ENCODE measurements at regions of chr19 and their contacts with region 1.

Region 1: GRCh38 chr19:6654347-6655310 is 15.3 kb downstream of the TNFSF14 start:
- DNase-seq: peak; percentile 76
- H3K4me3 Mint-ChIP-seq: peak overlapping the region; percentile 75
- H3K27ac Mint-ChIP-seq: peak overlapping the region; percentile 98
- H3K4me1 Mint-ChIP-seq: peaks cover 59% of the 10 kb centered on the region
- H3K27me3 Mint-ChIP-seq: no peaks in the 10 kb centered on the region

Region 2: DNA sequence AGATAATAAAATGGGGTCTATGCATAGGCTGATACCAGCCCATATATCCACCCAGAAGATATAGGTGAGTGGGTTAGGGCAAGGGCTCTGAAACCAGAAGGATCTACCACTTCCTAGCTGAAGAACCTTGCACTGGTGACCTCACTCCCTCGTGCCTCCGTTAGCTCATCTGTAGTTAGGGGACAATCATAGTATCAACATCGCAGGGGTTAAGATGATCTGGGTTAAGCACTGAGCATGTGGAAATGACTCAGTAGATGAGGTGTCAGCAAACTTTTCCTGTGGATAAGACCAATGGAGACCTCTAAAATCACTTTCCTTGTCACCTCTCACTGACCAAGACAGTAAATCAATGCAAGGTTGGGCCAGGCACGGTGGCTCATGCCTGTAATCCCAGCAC is 15.2 kb before region 1 on chr19:
- CTCF ChIA-PET with region 1: interaction called, 7 read pairs
- POLR2A ChIA-PET with region 1: interaction called, 63 read pairs
- DNase-seq: peak; percentile 68
- H3K4me3 Mint-ChIP-seq: no peak overlapping the region
- H3K27ac Mint-ChIP-seq: peak overlapping the region; percentile 47
- H3K4me1 Mint-ChIP-seq: peaks cover 46% of the 10 kb centered on the region
- H3K27me3 Mint-ChIP-seq: peaks cover 1% of the 10 kb centered on the region

Region 3: DNA sequence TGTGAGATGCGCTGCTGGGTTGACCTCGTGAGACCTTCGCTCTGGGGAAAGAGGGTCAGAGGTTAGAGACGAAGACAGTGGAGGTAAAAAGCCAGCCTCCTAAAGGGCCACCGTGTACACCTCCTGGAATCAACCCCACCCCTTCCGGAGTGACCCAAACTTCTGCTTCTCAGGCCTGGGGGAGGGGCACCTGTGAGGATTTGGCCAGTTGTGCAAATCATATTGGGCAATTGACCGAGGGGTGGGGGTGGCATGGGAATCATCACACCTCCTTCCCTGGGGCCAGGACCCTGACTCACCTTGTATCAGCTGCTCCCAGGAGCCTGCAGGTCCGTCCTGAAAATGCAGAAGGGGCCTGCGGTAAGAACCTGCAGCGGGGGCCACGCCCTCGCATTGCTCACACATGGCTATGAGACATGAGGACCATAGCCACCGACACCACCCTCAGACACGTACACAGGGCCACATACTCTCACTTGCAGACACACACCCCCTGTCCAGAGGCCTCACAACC is 12.5 kb after region 1 on chr19:
- CTCF ChIA-PET with region 1: interaction called, 6 read pairs
- POLR2A ChIA-PET with region 1: interaction called, 66 read pairs
- DNase-seq: peak; percentile 45
- H3K4me3 Mint-ChIP-seq: peak overlapping the region; percentile 56
- H3K27ac Mint-ChIP-seq: peak overlapping the region; percentile 48
- H3K4me1 Mint-ChIP-seq: peaks cover 46% of the 10 kb centered on the region
- H3K27me3 Mint-ChIP-seq: peaks cover 5% of the 10 kb centered on the region

Region 4: DNA sequence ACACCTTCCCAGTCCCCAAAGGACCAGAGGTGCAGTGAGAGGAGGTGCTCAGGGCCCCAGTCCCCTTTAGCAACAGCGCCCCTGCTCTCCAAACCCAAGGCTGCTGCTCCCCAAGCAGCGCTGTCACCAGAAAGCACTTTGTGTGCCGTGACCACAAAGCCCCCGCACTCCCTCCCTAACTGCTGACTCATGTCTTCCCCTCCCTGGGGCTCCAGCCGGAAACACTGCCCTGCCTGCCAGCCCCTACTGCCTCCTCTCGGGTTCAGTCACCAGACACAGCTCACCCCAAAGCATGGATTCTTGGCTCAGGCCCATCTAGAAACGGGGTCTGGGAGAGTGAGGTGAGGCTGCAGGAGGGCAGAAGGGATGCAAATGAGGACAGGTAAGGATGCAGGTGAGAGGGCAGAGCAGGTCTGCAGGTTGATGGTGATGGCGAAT is 20.3 kb after region 1 on chr19:
- CTCF ChIA-PET with region 1: interaction called, 7 read pairs
- POLR2A ChIA-PET with region 1: interaction called, 66 read pairs
- DNase-seq: peak; percentile 94
- H3K4me3 Mint-ChIP-seq: peak overlapping the region; percentile 66
- H3K27ac Mint-ChIP-seq: peak overlapping the region; percentile 81
- H3K4me1 Mint-ChIP-seq: peaks cover 70% of the 10 kb centered on the region
- H3K27me3 Mint-ChIP-seq: peaks cover 8% of the 10 kb centered on the region

Region 5: DNA sequence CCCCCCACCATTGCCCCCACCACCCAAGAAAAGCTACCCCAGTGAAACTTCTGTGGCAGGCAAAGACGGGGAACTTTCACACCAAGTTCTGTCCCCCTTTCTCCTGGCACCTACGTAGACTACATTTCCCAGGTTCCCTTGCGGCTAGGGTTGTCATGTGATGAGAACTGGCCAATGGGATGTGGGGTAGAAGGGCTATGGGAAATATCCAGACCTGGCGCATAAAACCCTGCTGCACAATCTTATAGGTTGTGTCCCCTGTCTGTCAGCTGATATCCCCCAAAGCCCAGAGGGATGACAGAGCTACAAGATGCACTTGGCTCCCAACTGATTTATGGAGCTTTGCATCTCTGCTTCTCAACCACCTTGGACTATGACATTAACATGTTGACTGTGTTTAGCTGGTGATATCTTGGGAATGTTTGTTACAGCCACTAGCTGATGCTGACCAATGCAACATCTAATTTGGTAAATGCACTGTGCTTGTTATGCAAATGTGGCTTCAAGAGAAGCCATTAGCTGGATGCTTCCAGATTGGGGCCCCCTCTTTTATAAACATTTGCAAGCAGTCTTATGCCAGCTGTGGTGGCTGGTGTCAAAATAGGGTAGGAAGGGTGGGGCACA is 106.5 kb after region 1 on chr19:
- CTCF ChIA-PET with region 1: no interaction called
- POLR2A ChIA-PET with region 1: no interaction called
- DNase-seq: no peak
- H3K4me3 Mint-ChIP-seq: no peak overlapping the region
- H3K27ac Mint-ChIP-seq: no peak overlapping the region
- H3K4me1 Mint-ChIP-seq: peaks cover 22% of the 10 kb centered on the region
- H3K27me3 Mint-ChIP-seq: no peaks in the 10 kb centered on the region